CD14-positive monocyte (primary cell): ENCODE measurements at regions of chr11 and their contacts with region 1.

Region 1: DNA sequence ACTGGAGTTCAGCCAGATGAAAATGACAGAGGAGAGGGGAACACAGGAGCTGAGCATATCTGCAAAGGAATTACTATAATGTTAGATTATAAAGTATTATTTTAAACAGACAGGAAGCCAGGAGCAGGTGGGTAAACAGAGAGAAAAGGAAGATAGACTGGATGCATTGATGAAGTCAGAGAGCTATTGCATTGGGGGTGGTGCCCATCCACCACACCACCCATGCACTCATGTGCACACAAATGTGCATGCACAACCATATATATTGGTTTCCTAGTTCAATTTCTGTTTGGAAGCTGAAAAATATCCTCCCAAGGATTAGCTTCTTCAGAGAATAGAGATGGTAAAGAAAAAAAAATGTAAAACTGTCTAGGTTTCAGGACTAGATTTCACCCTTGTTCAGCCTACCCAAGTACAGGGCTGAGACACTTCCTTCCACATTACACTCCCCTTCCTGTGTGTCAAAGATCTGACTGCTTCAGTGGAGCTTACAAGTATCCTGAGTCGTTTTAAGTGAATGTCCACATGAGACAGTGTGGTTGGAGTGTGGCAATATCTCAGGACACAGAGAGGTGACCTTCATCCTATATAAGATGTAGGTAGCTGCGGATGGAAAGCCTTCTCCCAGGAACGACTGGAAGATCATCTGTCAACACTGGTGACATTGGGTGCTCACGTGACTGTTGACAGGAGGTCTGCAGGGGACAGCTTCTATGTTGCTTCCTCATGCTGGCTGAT is 12.2 kb upstream of the SMPD1 start:
- DNase-seq: peak; percentile 33 to 41 (median 37)
- H3K4me3 ChIP-seq: peak overlapping the region in 2 of 3 experiments; percentile 9 to 43
- H3K4me3 Mint-ChIP-seq: peak overlapping the region in 1 of 2 donors; percentile 75
- H3K27ac ChIP-seq: peak overlapping the region; percentile 18 to 58
- H3K27ac Mint-ChIP-seq: peak overlapping the region; percentile 21 to 82 (median 76)
- H3K4me1 ChIP-seq: peaks cover 11 to 16% of the 10 kb centered on the region in 2 donors
- H3K4me1 Mint-ChIP-seq: peaks cover 16% of the 10 kb centered on the region
- H3K27me3 ChIP-seq: no peaks in the 10 kb centered on the region
- H3K27me3 Mint-ChIP-seq: peaks cover 0 to 3% (median 2%) of the 10 kb centered on the region in 3 donors
- CTCF ChIP-seq: no peak

Region 2: DNA sequence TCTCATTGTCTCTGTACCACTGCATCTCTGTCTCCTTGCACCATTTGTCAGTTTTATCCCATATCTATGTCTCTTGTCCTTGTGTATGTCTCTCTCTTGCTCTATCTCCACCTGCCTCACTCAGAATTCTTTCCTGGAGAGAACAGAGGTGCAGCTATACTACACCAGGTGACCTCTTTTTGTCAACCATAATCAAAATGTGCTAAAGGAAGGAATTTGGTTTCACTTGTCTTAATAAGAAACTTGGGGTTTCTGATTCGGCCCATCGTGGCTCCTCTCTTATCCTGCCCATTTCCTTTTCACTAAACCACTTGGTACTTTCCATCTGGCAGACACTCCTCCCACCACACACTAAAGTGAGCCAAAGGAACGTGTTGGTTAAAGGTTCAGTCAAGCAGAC is 174.7 kb before region 1 on chr11:
- intact Hi-C with region 1: no loop called
- DNase-seq: peak in 1 of 3 donors; percentile 66
- H3K4me3 ChIP-seq: peak overlapping the region in 1 of 3 experiments; percentile 10
- H3K4me3 Mint-ChIP-seq: no peak overlapping the region
- H3K27ac ChIP-seq: peak overlapping the region; percentile 48 to 100
- H3K27ac Mint-ChIP-seq: peak overlapping the region; percentile 100
- H3K4me1 ChIP-seq: peaks cover 72 to 89% of the 10 kb centered on the region in 2 donors
- H3K4me1 Mint-ChIP-seq: peaks cover 82% of the 10 kb centered on the region
- H3K27me3 ChIP-seq: no peaks in the 10 kb centered on the region
- H3K27me3 Mint-ChIP-seq: peaks cover 0 to 3% (median 1%) of the 10 kb centered on the region in 3 donors
- CTCF ChIP-seq: no peak

Region 3: GRCh38 chr11:6362873-6363678 is 15.0 kb before region 1 on chr11:
- intact Hi-C with region 1: no loop called
- DNase-seq: peak; percentile 42 to 54 (median 49)
- H3K4me3 ChIP-seq: no peak overlapping the region
- H3K4me3 Mint-ChIP-seq: no peak overlapping the region
- H3K27ac ChIP-seq: no peak overlapping the region
- H3K27ac Mint-ChIP-seq: no peak overlapping the region
- H3K4me1 ChIP-seq: no peaks in the 10 kb centered on the region
- H3K4me1 Mint-ChIP-seq: no peaks in the 10 kb centered on the region
- H3K27me3 ChIP-seq: no peaks in the 10 kb centered on the region
- H3K27me3 Mint-ChIP-seq: no peaks in the 10 kb centered on the region
- CTCF ChIP-seq: peak; percentile 76

Region 4: GRCh38 chr11:6505577-6506240 is 127.6 kb after region 1 on chr11:
- intact Hi-C with region 1: loop called (anchors 5 kb)
- DNase-seq: peak; percentile 18 to 42 (median 40)
- H3K4me3 ChIP-seq: no peak overlapping the region
- H3K4me3 Mint-ChIP-seq: no peak overlapping the region
- H3K27ac ChIP-seq: no peak overlapping the region
- H3K27ac Mint-ChIP-seq: no peak overlapping the region
- H3K4me1 ChIP-seq: no peaks in the 10 kb centered on the region
- H3K4me1 Mint-ChIP-seq: no peaks in the 10 kb centered on the region
- H3K27me3 ChIP-seq: no peaks in the 10 kb centered on the region
- H3K27me3 Mint-ChIP-seq: no peaks in the 10 kb centered on the region
- CTCF ChIP-seq: peak; percentile 78